ENCODE measurements at regions of chr9 and their contacts with region 1.

Region 1: DNA sequence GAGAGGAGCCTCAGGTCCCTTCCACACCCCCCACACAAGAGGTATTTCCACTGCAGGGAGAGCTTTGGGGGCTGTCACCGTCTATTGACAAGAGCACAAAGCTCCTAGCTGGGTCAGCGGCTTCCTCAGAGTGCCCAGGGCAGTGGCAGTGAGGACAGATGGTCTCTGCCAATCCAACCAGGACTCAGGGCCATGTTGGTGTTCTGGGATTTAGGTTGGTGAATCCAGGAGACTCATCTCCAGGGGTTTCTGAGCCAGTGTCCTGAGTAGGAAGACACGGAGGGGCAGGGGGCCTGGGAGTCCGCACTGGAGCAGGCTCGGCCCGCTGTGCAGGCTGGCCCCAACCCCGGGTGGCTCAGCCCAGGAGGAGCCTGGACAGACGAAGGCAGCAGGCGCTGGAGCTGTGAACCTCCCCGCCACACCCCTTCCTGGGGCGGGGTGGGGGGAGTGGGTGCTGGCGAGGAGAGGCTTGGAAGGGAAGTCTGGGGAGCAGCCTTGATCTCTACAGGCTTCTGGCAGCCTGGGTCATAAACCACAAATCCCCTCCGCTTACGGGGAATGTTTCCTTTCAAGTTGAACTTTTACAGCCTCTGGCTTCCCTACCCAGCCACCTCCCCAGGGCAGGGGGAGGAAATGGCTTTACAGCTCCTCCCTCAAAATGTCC is 19.6 kb downstream of the CRB2 start:
- DNase-seq: no peak
- H3K4me3 ChIP-seq: no peak overlapping the region
- H3K27ac ChIP-seq: no peak overlapping the region
- H3K4me1 ChIP-seq: no peaks in the 10 kb centered on the region
- H3K27me3 ChIP-seq: peaks cover 4 to 37% of the 10 kb centered on the region in 2 donors
- CTCF ChIP-seq: no peak
- POLR2A ChIP-seq: no peak

Region 2: DNA sequence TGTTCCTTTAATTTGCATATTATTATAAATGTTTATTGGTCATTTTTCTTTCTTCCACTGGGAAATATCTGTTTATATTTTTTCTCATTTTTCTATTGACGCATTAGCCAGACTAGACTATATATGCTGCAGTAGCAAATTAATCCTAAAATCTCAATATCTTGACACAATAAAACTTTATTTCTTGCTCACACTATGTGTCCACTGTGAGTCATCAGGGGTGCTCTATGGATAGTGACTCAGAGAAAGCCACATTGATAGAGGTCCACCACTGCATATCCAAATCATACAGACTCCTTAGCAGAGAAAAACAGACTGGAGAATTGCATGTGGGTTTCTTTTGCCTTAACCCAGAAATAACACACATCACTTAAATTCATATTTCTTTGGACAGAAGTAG is 679.9 kb before region 1 on chr9:
- intact Hi-C with region 1: loop called (anchors 5 kb)
- DNase-seq: no peak
- H3K4me3 ChIP-seq: no peak overlapping the region
- H3K27ac ChIP-seq: no peak overlapping the region
- H3K4me1 ChIP-seq: no peaks in the 10 kb centered on the region
- H3K27me3 ChIP-seq: no peaks in the 10 kb centered on the region
- CTCF ChIP-seq: no peak
- POLR2A ChIP-seq: no peak

Region 3: GRCh38 chr9:122897969-122898368 is 477.6 kb before region 1 on chr9:
- intact Hi-C with region 1: loop called (anchors 5 kb)
- DNase-seq: no peak
- H3K4me3 ChIP-seq: no peak overlapping the region
- H3K27ac ChIP-seq: no peak overlapping the region
- H3K4me1 ChIP-seq: no peaks in the 10 kb centered on the region
- H3K27me3 ChIP-seq: no peaks in the 10 kb centered on the region
- CTCF ChIP-seq: no peak
- POLR2A ChIP-seq: no peak